Mucosa of descending colon (tissue), 3 donors: ENCODE measurements at regions of chr2 and their contacts with region 1.

Region 1: GRCh38 chr2:10832203-10832936 is 19.8 kb upstream of the PDIA6 start:
- DNase-seq: peak; percentile 83 to 89 (median 85)
- ATAC-seq: peak; percentile 83
- H3K4me3 ChIP-seq: no peak overlapping the region
- H3K4me1 ChIP-seq: peaks cover 6% of the 10 kb centered on the region
- CTCF ChIP-seq: peak; percentile 87

Region 2: DNA sequence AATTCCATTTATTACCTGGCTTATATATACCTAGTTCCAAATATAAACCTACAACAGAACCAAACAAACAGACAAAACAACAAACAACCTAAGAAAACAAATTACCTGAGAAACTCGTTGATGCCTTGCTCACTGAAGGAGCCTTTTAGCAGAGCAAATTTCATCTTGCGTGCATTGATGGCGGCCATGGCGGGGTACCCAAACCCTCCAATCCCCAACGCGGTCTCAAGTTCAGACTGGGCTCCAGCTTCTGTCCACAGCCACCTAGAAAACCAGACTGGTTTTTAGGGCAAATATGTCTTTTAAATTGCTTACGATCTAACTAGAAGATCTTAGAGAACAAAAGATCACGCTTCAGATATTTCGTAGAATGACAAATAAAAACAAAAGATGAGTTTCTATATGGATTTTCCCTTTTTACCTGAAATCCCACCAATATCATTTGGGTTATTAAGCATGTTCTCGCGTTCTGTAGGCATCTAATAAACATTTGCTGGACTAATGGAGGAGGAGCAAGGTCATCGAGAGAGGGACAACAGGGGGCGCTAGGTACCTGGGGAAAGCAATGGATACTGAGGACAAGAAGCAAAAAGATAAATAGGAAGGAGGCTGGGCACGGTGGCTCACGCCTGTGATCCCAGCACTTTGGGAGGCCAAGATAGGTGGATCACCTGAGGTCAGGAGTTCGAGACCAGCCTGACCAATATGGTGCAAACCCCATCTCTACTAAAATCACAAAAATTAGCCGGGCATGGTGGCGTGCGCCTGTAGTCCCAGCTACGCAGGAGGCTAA is 45.0 kb before region 1 on chr2:
- intact Hi-C with region 1: no loop called
- DNase-seq: peak in 1 of 3 donors; percentile 50
- ATAC-seq: no peak
- H3K4me3 ChIP-seq: no peak overlapping the region
- H3K4me1 ChIP-seq: peaks cover 16% of the 10 kb centered on the region
- CTCF ChIP-seq: no peak

Region 3: GRCh38 chr2:10889651-10890215 is 57.4 kb after region 1 on chr2:
- intact Hi-C with region 1: loop called (anchors 10 kb)
- DNase-seq: peak in 1 of 3 donors; percentile 18
- ATAC-seq: no peak
- H3K4me3 ChIP-seq: no peak overlapping the region
- H3K4me1 ChIP-seq: peaks cover 12% of the 10 kb centered on the region
- CTCF ChIP-seq: no peak

Region 4: GRCh38 chr2:11124503-11125068 is 292.2 kb after region 1 on chr2:
- intact Hi-C with region 1: loop called (anchors 2 to 5 kb)
- DNase-seq: peak; percentile 74 to 90 (median 86)
- ATAC-seq: peak; percentile 92
- H3K4me3 ChIP-seq: no peak overlapping the region
- H3K4me1 ChIP-seq: peaks cover 1% of the 10 kb centered on the region
- CTCF ChIP-seq: peak; percentile 67